ENCODE measurements at regions of chr1 and their contacts with region 1.

Region 1: DNA sequence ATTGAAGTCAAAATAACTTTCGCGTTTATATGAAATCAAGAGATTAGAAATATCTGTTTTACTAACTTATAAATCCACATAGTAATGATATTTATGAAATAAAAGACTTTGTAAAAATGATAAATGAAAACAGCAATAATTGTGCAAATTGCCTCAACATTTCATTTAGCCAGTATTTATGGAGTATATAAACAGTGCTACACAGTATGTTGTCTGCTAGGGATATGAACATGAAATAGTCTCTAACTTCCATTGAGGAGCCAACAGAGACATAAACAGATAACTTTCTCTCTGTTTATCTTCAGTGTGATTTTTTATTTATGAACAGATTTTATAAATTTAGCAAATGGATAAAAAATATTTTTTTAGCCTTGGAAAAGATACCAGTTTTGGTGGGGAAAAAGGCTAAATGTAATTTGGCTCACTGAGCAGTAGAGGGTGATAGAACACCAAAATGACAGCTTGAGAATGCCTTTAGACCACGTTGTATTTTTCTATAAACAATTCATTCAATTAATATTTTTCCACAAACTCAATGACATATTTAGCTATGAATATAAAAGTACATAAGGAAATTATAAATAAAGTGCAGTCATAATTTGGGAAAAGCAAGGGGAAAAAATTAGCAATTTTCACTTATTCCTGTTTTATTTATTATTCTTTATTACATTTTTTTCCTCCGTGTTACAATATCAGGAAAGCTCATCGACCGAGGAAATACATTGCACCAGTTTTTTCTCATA is 47.5 kb upstream of the EEIG2 start:
- DNase-seq: no peak
- H3K4me3 ChIP-seq: no peak overlapping the region
- H3K27ac ChIP-seq: no peak overlapping the region
- H3K4me1 ChIP-seq: no peaks in the 10 kb centered on the region
- H3K27me3 ChIP-seq: no peaks in the 10 kb centered on the region
- CTCF ChIP-seq: peak; percentile 73 to 77 (median 74)
- POLR2A ChIP-seq: no peak

Region 2: GRCh38 chr1:108646648-108647269 is 134.3 kb after region 1 on chr1:
- intact Hi-C with region 1: loop called (anchors 5 kb)
- DNase-seq: peak; percentile 65
- H3K4me3 ChIP-seq: no peak overlapping the region
- H3K27ac ChIP-seq: peak overlapping the region in 1 of 2 donors; percentile 68
- H3K4me1 ChIP-seq: peaks cover 14% of the 10 kb centered on the region
- H3K27me3 ChIP-seq: no peaks in the 10 kb centered on the region
- CTCF ChIP-seq: no peak
- POLR2A ChIP-seq: no peak

Region 3: DNA sequence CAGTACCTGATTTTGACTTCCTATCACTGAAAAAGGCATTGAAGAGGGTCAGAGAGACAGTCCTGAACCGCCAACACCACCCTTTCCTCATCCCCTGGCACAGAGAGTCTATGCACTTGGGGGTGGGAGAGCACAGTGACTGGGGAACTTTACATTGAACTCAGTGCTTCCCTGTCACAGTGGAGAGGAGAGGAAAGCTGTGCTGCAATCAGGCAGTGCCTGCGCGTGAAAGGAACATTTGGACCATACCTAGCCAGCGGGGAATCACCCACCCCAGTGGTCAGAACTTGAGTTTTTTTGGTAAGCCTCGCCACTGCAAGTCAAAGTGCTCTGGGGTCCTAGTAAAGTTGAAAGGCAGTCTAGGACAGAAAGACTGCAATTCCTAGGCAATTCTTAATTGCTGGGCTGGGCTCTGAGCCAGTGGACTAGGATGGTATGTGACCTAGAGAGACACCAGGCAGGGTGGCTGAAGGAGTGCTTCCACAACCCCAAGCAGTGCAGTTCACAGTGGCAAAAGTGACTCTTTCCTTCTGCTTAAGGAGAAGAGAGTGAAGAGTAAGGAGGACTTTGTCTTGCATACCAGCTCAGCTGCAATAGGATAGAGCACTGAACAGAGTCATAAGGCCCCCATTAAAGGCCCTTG is 157.8 kb after region 1 on chr1:
- intact Hi-C with region 1: no loop called
- DNase-seq: no peak
- H3K4me3 ChIP-seq: no peak overlapping the region
- H3K27ac ChIP-seq: no peak overlapping the region
- H3K4me1 ChIP-seq: no peaks in the 10 kb centered on the region
- H3K27me3 ChIP-seq: no peaks in the 10 kb centered on the region
- CTCF ChIP-seq: no peak
- POLR2A ChIP-seq: no peak